Tibial artery (tissue), 4 donors: ENCODE measurements at regions of chr20 and their contacts with region 1.

Region 1: DNA sequence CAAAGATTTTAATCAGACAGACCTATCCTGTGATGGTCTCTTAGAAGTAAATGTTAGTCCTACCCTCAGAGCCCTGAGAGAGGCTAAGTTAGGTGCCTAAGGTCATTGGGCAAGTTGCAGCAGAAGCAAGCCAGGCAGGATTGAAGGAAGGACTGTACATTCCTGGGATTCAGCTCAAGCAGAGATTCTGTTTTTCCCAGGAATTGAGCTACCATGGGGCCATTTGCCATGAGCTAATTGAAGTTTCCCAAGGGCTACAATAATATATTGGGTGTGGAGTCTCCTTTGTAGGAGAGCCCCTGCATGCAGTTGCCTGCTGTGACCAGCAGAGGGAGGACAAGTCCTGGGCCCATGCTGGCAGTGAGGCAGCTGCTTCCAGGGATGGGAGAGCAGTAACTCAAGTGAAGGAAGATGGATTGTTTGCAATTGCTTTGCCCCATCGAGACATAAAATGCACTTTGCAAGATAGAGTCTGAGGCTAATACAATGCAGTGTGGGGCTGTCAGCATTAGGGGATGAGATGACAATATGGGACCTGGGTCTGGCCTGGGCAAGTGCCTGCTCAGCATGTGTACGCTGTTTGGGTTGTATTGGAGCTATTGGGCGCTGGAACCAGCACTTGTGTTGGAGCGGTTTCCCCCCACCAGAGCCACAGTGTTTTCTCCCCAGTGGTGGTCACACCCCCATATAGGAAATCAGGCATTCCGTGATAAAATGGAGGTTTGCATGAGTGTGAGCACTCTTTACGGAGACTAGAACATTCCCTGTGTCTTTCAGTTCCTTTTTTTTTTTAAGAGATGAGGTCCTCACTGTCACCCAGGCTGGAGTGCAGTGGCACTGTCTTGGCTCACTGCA is 27.9 kb downstream of the DNMT3B start:
- DNase-seq: peak; percentile 71 to 79
- H3K4me3 ChIP-seq: no peak overlapping the region
- H3K27ac ChIP-seq: no peak overlapping the region
- H3K4me1 ChIP-seq: no peaks in the 10 kb centered on the region
- H3K27me3 ChIP-seq: no peaks in the 10 kb centered on the region
- CTCF ChIP-seq: peak; percentile 90 to 98

Region 2: DNA sequence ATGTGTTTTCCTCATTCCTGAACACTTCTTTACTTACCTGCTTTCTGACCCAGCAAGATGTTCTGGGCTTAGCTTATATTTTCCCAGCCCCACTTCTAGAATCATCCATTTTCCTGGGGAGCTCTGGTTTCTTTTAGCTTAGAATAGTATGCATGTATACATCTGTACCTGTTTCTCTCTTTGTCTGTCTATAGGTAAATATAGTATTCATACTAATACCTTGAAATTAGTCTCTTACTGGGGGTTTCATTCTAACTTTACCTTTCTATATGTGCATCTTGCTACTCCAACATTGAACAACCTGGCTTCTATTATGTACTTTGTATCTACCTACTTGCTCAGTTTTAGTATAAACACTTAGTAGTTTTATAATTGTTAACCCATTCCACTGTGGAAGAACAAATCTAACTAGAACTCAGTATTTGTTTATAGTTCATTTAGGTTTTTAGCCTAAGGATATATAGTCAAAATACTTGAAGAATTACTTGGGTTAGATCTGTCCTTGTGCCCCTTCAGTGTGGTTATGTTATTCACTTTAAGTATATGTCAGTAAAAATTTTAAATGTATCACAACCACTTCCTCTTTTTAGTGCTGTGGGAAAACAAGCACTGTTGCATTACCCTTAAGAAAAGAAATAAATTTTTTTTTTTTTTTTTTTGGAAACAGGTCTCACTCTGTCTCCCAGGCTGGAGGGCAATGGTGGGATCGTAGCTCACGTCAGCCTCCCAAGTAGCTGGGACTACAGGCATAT is 378.0 kb before region 1 on chr20:
- intact Hi-C with region 1: no loop called
- DNase-seq: no peak
- H3K4me3 ChIP-seq: no peak overlapping the region
- H3K27ac ChIP-seq: no peak overlapping the region
- H3K4me1 ChIP-seq: peaks cover 0 to 14% (median 4%) of the 10 kb centered on the region in 4 donors
- H3K27me3 ChIP-seq: no peaks in the 10 kb centered on the region
- CTCF ChIP-seq: no peak

Region 3: DNA sequence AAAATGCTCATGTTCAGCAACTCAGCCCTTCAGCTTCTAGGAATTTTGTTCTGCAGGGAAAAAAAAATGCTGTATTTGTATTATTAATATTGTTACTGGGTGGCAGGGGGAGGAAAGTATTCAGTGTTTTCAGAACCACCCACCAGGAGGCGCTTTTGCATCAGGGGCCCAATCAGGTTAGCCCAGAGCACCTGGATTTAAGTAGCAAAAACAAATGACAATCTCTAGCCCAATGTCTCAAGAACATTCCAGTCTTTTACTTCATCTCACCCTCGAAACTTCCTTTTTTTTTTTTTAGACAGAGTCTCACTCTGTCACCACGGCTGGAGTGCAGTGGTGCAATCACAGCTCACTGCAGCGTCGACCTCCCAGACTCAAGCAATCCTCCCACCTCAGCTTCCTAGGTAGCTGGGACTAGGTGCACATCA is 115.7 kb before region 1 on chr20:
- intact Hi-C with region 1: loop called (anchors 10 kb)
- DNase-seq: no peak
- H3K4me3 ChIP-seq: no peak overlapping the region
- H3K27ac ChIP-seq: no peak overlapping the region
- H3K4me1 ChIP-seq: no peaks in the 10 kb centered on the region
- H3K27me3 ChIP-seq: no peaks in the 10 kb centered on the region
- CTCF ChIP-seq: no peak

Region 4: DNA sequence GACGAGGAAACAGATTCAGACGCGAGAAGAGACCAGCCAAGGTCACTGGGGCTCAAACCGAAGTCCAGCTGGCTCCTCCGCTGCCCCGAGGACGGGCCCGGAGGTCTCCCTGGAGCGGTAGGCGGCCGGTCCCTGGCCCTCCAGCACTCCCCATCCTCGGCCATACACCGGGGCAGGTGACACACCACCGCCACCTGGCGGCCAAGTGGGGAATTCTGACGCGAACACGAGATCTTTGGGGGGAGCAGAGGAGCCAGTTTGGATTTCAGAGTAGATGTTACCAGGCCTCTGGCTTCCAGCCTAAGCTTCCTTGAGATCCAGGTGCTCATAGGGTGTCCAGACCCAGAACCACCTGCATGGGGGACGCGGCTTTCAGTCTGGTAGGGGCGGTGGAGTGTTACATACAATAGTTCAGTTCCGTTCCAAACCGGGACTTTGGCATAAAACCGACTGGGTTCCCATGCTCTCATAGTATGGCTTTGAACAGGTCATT is 509.0 kb after region 1 on chr20:
- intact Hi-C with region 1: loop called (anchors 10 kb)
- DNase-seq: peak; percentile 36 to 72
- H3K4me3 ChIP-seq: no peak overlapping the region
- H3K27ac ChIP-seq: no peak overlapping the region
- H3K4me1 ChIP-seq: peaks cover 0 to 4% (median 2%) of the 10 kb centered on the region in 4 donors
- H3K27me3 ChIP-seq: peaks cover 0 to 41% of the 10 kb centered on the region in 2 donors
- CTCF ChIP-seq: peak; percentile 65 to 75